Thyroid gland (tissue), 4 donors: ENCODE measurements at regions of chr6 and their contacts with region 1.

Region 1: GRCh38 chr6:148874698-148875293 is 128.0 kb downstream of the UST start:
- DNase-seq: no peak
- H3K4me3 ChIP-seq: no peak overlapping the region
- H3K27ac ChIP-seq: peak overlapping the region in 1 of 3 donors; percentile 9
- H3K4me1 ChIP-seq: peaks cover 21 to 31% of the 10 kb centered on the region in 2 donors
- H3K27me3 ChIP-seq: no peaks in the 10 kb centered on the region
- CTCF ChIP-seq: no peak
- POLR2A ChIP-seq: no peak

Region 2: GRCh38 chr6:148758492-148758891 is 116.3 kb before region 1 on chr6:
- intact Hi-C with region 1: loop called (anchors 10 kb)
- DNase-seq: peak in 1 of 2 donors; percentile 39
- H3K4me3 ChIP-seq: no peak overlapping the region
- H3K27ac ChIP-seq: peak overlapping the region in 2 of 3 donors; percentile 88 to 95
- H3K4me1 ChIP-seq: peaks cover 58 to 61% of the 10 kb centered on the region in 2 donors
- H3K27me3 ChIP-seq: no peaks in the 10 kb centered on the region
- CTCF ChIP-seq: no peak
- POLR2A ChIP-seq: peak in 1 of 2 donors; percentile 28

Region 3: GRCh38 chr6:149082286-149082707 is 207.5 kb after region 1 on chr6:
- intact Hi-C with region 1: no loop called
- DNase-seq: peak; percentile 82 to 91
- H3K4me3 ChIP-seq: no peak overlapping the region
- H3K27ac ChIP-seq: peak overlapping the region in 1 of 3 donors; percentile 14
- H3K4me1 ChIP-seq: peaks cover 33 to 35% of the 10 kb centered on the region in 2 donors
- H3K27me3 ChIP-seq: no peaks in the 10 kb centered on the region
- CTCF ChIP-seq: peak in 5 of 6 experiments; percentile 29 to 83 (median 80)
- POLR2A ChIP-seq: no peak